ENCODE measurements at regions of chr12 and their contacts with region 1.

Region 1: GRCh38 chr12:106302401-106303201 is at the start of gene TCP11L2:
- DNase-seq: peak; percentile 93 to 95 (median 94)
- H3K4me3 ChIP-seq: peak within 1 kb of the TSS; percentile 86 to 98
- H3K4me3 Mint-ChIP-seq: peak within 1 kb of the TSS; percentile 93 to 99 (median 96)
- H3K27ac ChIP-seq: peak within 1 kb of the TSS; percentile 97
- H3K27ac Mint-ChIP-seq: peak within 1 kb of the TSS; percentile 95 to 100 (median 99)
- H3K4me1 ChIP-seq: peaks cover 59% of the 10 kb centered on the region
- H3K4me1 Mint-ChIP-seq: peaks cover 49 to 73% (median 56%) of the 10 kb centered on the region in 4 donors
- H3K27me3 ChIP-seq: no peaks in the 10 kb centered on the region
- H3K27me3 Mint-ChIP-seq: peaks cover 0 to 1% of the 10 kb centered on the region in 2 donors
- total RNA-seq, gene TCP11L2: 185 to 186 TPM

Region 2: GRCh38 chr12:106223485-106224354 is 78.9 kb before region 1 on chr12:
- CTCF ChIA-PET with region 1: interaction called, 49 read pairs
- POLR2A ChIA-PET with region 1: interaction called, 87 read pairs
- intact Hi-C with region 1: loop called (anchors 1 kb)
- DNase-seq: peak; percentile 57 to 73 (median 68)
- H3K4me3 ChIP-seq: no peak overlapping the region
- H3K4me3 Mint-ChIP-seq: peak overlapping the region in 1 of 8 donors; percentile 26
- H3K27ac ChIP-seq: no peak overlapping the region
- H3K27ac Mint-ChIP-seq: peak overlapping the region in 4 of 7 donors; percentile 2 to 73 (median 58)
- H3K4me1 ChIP-seq: peaks cover 18% of the 10 kb centered on the region
- H3K4me1 Mint-ChIP-seq: peaks cover 14 to 27% (median 22%) of the 10 kb centered on the region in 4 donors
- H3K27me3 ChIP-seq: no peaks in the 10 kb centered on the region
- H3K27me3 Mint-ChIP-seq: peaks cover 7 to 12% of the 10 kb centered on the region in 2 donors

Region 3: DNA sequence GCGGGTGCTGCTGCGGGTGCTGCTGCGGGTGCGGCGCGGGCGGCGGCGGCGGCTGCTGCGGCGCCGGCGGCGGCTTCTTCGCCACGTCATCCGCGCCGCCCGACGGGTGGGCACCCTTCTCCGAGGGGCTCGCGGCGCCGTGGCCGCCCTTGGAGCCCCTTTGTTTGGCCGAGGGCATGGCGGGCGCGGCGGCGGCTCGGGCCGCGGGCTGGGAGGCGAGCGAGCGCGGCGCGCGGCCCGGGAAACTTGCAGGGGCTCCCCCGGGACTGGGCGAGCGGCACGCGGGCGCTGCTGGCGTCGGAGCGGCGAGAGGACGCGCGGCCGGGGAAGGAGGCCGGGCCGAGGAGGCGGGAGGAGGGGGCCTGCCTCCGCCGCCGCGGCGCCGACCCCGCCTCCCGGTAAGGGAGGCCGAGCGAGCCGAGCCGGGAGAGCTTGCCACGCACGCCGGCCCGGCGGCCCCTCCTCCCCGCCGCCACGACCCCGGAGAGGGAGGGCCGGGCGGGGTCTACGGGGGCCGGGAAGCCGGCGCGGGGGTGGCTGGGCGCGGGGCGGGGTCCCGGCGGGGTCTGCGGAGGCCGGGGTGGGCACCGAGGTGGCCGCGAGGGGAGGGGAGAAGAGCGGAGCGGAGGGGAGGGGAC is 54.8 kb before region 1 on chr12 and contains the start of gene CKAP4:
- CTCF ChIA-PET with region 1: interaction called, 8 read pairs
- POLR2A ChIA-PET with region 1: interaction called, 223 read pairs
- intact Hi-C with region 1: loop called (anchors 1 kb)
- DNase-seq: peak; percentile 56 to 65 (median 64)
- H3K4me3 ChIP-seq: peak within 1 kb of the TSS; percentile 32 to 54
- H3K4me3 Mint-ChIP-seq: peak within 1 kb of the TSS; percentile 83 to 90 (median 87)
- H3K27ac ChIP-seq: peak within 1 kb of the TSS; percentile 74
- H3K27ac Mint-ChIP-seq: peak within 1 kb of the TSS; percentile 80 to 98 (median 96)
- H3K4me1 ChIP-seq: peaks cover 34% of the 10 kb centered on the region
- H3K4me1 Mint-ChIP-seq: peaks cover 9 to 43% (median 30%) of the 10 kb centered on the region in 4 donors
- H3K27me3 ChIP-seq: no peaks in the 10 kb centered on the region
- H3K27me3 Mint-ChIP-seq: no peaks in the 10 kb centered on the region
- total RNA-seq, gene CKAP4: 12.5 to 13.0 TPM

Region 4: DNA sequence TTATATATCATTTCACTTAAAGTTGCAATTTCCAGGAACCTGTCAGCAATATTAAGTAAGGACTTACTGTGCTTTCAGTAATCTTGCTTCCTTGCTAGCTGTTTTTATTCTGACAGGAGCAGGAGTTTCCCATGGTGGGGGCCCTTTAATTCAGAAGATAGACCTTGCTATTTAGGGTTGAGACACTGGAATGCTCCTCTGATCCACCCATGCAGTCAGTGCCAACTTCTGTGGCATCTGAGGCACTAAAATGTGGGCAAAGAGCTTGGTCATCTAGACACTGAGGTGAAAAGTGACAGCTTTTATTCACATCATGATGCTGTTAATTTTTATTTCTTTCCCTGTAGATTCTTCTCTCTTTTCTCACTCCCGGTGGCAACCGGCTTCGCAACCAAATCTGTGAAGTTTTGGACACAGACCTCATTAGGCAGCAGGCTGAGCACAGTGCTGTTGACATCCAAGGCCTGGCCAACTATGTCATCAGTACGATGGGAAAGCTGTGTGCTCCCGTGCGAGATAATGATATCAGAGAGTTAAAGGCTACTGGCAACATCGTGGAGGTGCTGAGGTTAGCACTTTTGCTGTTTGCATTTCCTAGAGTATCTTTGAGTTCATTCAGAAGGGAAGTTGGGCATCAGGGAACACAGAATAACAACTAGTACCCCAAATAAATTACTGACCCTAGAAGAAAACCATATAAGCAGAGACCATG is 18.7 kb after region 1 on chr12:
- CTCF ChIA-PET with region 1: no interaction called
- POLR2A ChIA-PET with region 1: interaction called, 82 read pairs
- intact Hi-C with region 1: no loop called
- DNase-seq: no peak
- H3K4me3 ChIP-seq: no peak overlapping the region
- H3K4me3 Mint-ChIP-seq: no peak overlapping the region
- H3K27ac ChIP-seq: no peak overlapping the region
- H3K27ac Mint-ChIP-seq: peak overlapping the region in 4 of 7 donors; percentile 5 to 87 (median 34)
- H3K4me1 ChIP-seq: no peaks in the 10 kb centered on the region
- H3K4me1 Mint-ChIP-seq: peaks cover 5 to 35% (median 15%) of the 10 kb centered on the region in 4 donors
- H3K27me3 ChIP-seq: no peaks in the 10 kb centered on the region
- H3K27me3 Mint-ChIP-seq: no peaks in the 10 kb centered on the region

Region 5: GRCh38 chr12:106774005-106774807 is 471.6 kb after region 1 on chr12 and contains the start of gene RIC8B:
- CTCF ChIA-PET with region 1: no interaction called
- POLR2A ChIA-PET with region 1: interaction called, 5 read pairs
- intact Hi-C with region 1: loop called (anchors 1 kb)
- DNase-seq: peak; percentile 73 to 84 (median 77)
- H3K4me3 ChIP-seq: peak within 1 kb of the TSS; percentile 55 to 78
- H3K4me3 Mint-ChIP-seq: peak within 1 kb of the TSS; percentile 92 to 98 (median 96)
- H3K27ac ChIP-seq: peak within 1 kb of the TSS; percentile 84
- H3K27ac Mint-ChIP-seq: peak within 1 kb of the TSS; percentile 89 to 99 (median 98)
- H3K4me1 ChIP-seq: peaks cover 32% of the 10 kb centered on the region
- H3K4me1 Mint-ChIP-seq: peaks cover 24 to 51% (median 39%) of the 10 kb centered on the region in 4 donors
- H3K27me3 ChIP-seq: no peaks in the 10 kb centered on the region
- H3K27me3 Mint-ChIP-seq: no peaks in the 10 kb centered on the region
- total RNA-seq, gene RIC8B: 20.8 to 25.0 TPM